AG04450 (cell line): ENCODE measurements at regions of chr21 and their contacts with region 1.

Region 1: GRCh38 chr21:39430457-39430856 is 15.1 kb downstream of the LCA5L start:
- DNase-seq: no peak
- H3K4me3 ChIP-seq: no peak overlapping the region
- H3K27ac ChIP-seq: peak overlapping the region; percentile 1
- H3K27me3 ChIP-seq: no peaks in the 10 kb centered on the region
- CTCF ChIP-seq: no peak

Region 2: GRCh38 chr21:39441502-39442475 is 11.3 kb after region 1 on chr21:
- CTCF ChIA-PET with region 1: interaction called, 43 read pairs
- POLR2A ChIA-PET with region 1: no interaction called
- DNase-seq: no peak
- H3K4me3 ChIP-seq: no peak overlapping the region
- H3K27ac ChIP-seq: no peak overlapping the region
- H3K27me3 ChIP-seq: no peaks in the 10 kb centered on the region
- CTCF ChIP-seq: peak; percentile 86